Endothelial cell of umbilical vein (primary cell): ENCODE measurements at regions of chr7 and their contacts with region 1.

Region 1: GRCh38 chr7:191981-192649 is at the start of gene FAM20C:
- DNase-seq: peak; percentile 75
- H3K4me3 ChIP-seq: peak within 1 kb of the TSS; percentile 61 to 94 (median 80)
- H3K27ac ChIP-seq: peak within 1 kb of the TSS; percentile 18
- H3K4me1 ChIP-seq: peaks cover 15% of the 10 kb centered on the region
- H3K27me3 ChIP-seq: no peaks in the 10 kb centered on the region
- CTCF ChIP-seq: no peak
- POLR2A ChIP-seq: no peak
- total RNA-seq, gene FAM20C: 34.5 and 44.4 TPM in 2 replicates

Region 2: GRCh38 chr7:148932-149855 is 42.9 kb before region 1 on chr7:
- CTCF ChIA-PET with region 1: interaction called, 4 read pairs
- POLR2A ChIA-PET with region 1: no interaction called
- dilution Hi-C with region 1: no loop called
- intact Hi-C with region 1: loop called (anchors 2 kb)
- DNase-seq: peak; percentile 99
- H3K4me3 ChIP-seq: peak overlapping the region; percentile 42 to 80 (median 44)
- H3K27ac ChIP-seq: peak overlapping the region; percentile 79
- H3K4me1 ChIP-seq: peaks cover 9% of the 10 kb centered on the region
- H3K27me3 ChIP-seq: no peaks in the 10 kb centered on the region
- CTCF ChIP-seq: no peak
- POLR2A ChIP-seq: peak; percentile 98